ENCODE measurements at regions of chr17 and their contacts with region 1.

Region 1: DNA sequence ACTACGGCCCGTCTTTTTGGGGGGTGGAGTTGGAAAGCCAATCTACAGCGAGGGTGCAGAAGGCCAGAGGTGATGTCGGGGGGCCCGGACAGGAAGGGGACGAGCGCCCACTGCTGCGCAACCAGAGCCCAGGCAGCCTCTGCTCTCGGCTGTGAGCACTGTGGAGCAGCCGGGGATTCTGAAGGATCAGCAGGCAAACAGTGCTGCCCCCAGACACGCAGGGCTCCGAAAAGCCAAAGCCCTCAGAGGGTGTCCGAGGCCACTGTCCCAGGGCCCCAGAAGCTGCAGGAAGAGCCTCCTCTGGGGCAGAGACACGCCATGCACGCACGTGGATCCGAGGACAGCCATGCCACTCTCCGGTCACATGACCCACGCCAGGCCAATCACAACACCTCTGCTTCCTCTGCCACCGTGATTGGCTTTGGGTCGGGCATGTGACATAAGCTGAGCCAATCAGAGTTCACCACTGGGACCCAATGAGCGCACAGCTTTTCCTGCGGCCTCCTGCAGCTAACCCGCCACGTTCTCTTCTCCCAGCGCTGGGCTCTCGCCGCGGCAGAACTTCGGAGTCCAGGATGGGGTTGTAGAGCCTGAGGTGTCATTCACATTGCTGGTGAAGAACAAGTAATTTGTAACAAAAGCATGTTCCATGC is 40.7 kb downstream of the ACTG1 start:
- DNase-seq: peak in 3 of 4 donors; percentile 43 to 60 (median 52)
- ATAC-seq: peak; percentile 52
- H3K4me3 ChIP-seq: no peak overlapping the region
- H3K27ac ChIP-seq: no peak overlapping the region
- H3K4me1 ChIP-seq: peaks cover 25% of the 10 kb centered on the region
- H3K27me3 ChIP-seq: no peaks in the 10 kb centered on the region
- CTCF ChIP-seq: peak in 1 of 7 experiments; percentile 4
- POLR2A ChIP-seq: no peak

Region 2: GRCh38 chr17:81401723-81402529 is 70.0 kb before region 1 on chr17:
- intact Hi-C with region 1: loop called (anchors 10 kb)
- DNase-seq: peak in 2 of 4 donors; percentile 40 to 43
- ATAC-seq: no peak
- H3K4me3 ChIP-seq: no peak overlapping the region
- H3K27ac ChIP-seq: peak overlapping the region in 2 of 4 donors; percentile 34 to 93
- H3K4me1 ChIP-seq: peaks cover 56% of the 10 kb centered on the region
- H3K27me3 ChIP-seq: no peaks in the 10 kb centered on the region
- CTCF ChIP-seq: peak in 3 of 7 experiments; percentile 13 to 21 (median 19)
- POLR2A ChIP-seq: no peak